GM13976 (cell line): ENCODE measurements at regions of chr11 and their contacts with region 1.

Region 1: DNA sequence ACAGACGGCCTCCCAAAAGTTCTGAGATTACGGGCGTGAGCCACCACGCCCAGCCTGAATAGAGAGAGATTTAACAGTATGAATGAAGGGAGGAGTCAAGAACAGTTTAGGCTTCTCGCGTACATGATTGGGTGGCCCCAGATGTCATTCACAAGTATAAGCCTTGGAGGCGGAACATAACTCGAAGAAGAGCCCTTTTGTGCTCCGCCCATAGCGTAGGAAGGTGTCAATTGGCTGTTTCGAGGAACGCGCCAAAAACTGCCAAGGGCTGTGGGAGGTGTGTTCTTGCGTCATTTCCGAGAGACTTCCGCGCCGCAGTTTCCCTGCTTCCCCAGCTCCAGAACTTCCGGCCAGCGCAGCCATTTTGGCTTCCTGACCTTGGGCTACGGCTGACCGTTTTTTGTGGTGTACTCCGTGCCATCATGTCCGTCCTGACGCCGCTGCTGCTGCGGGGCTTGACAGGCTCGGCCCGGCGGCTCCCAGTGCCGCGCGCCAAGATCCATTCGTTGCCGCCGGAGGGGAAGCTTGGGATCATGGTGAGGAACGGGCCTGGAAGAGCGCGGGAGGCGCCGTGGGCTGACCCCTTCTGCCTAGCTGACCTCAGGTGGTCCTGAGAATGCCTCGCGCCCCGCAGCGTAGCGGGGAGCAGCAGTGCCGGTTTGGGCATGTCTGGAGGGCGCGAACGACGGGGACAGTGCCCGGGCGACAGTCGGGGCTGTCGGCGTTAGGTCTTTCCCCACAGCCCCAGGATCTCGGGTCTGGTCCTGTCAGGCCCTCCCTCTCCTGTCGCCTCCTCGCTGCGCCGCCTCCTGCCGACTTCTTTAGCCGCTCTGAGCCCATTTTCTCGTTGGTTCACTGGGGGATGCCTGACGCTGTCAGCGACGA is at the start of gene COX8A:
- DNase-seq: peak; percentile 98
- CTCF ChIP-seq: peak; percentile 2

Region 2: DNA sequence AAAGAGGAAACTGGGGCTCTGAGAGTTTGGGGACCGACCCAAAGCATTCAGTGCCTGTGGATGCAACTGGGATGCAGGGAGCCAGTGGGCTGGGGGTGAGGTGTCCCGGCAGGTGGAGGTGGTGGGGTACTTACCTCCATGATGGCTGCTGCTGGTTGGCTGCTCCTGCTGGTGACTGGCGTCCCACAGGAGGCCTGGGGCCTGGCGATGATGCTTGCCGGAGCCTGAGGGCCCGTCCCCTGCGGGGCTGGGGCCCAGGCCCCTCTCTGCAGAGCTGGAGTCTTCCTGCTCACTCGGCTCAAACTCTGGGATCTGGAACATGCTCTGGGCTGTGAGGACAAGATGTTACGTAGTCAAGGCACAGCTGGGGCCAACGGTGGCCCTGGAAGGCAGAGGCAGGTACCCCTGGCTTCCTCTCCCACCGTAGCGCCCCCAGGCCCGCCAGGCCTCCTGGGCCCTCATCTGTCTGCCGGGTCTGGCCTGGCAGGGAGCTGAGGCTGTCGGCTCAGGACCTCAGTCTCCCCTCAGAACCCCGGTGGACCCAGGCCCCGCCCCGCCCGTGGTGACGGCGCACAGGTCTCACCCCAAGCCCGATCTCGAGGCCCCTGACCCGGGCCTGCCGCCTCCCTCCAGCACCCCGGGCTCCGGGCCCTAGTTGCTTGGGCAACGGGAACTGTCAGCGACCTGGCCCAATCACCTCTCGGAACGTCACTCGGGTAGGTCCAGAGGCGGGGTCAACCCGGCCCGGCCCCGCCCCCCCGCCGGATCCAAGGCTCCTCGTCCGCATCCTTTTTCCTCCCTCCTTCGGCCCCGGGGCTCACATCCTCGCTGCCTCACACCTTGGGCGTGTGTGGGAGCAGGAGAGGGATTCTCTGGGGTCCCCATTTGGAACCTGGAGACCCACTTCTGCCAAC is 309.8 kb after region 1 on chr11 and contains the start of gene BAD:
- in situ Hi-C with region 1: loop called (anchors 25 kb)
- DNase-seq: peak; percentile 99
- CTCF ChIP-seq: no peak